ENCODE measurements at regions of chr2 and their contacts with region 1.

Region 1: GRCh38 chr2:156435715-156436496 is at the start of gene GPD2:
- DNase-seq: peak; percentile 90 to 95 (median 93)
- H3K4me3 ChIP-seq: peak within 1 kb of the TSS; percentile 63 to 78 (median 69)
- H3K27ac ChIP-seq: peak within 1 kb of the TSS; percentile 56 to 99 (median 98)
- H3K4me1 ChIP-seq: peaks cover 5 to 28% of the 10 kb centered on the region in 2 donors
- H3K27me3 ChIP-seq: no peaks in the 10 kb centered on the region
- CTCF ChIP-seq: peak in 1 of 6 experiments; percentile 11
- POLR2A ChIP-seq: peak in 1 of 2 donors; percentile 68
- total RNA-seq, gene GPD2: 10.7 to 33.8 (median 17.5) TPM

Region 2: GRCh38 chr2:156341452-156342253 is 94.3 kb before region 1 on chr2:
- intact Hi-C with region 1: loop called in 1 of 2 experiments (anchors 10 kb)
- DNase-seq: peak; percentile 90 to 96 (median 94)
- H3K4me3 ChIP-seq: peak overlapping the region; percentile 92 to 100 (median 100)
- H3K27ac ChIP-seq: peak overlapping the region; percentile 100
- H3K4me1 ChIP-seq: peaks cover 0 to 34% of the 10 kb centered on the region in 2 donors
- H3K27me3 ChIP-seq: no peaks in the 10 kb centered on the region
- CTCF ChIP-seq: no peak
- POLR2A ChIP-seq: peak; percentile 79 to 90

Region 3: GRCh38 chr2:156589381-156590079 is 153.6 kb after region 1 on chr2:
- intact Hi-C with region 1: loop called in 1 of 2 experiments (anchors 10 kb)
- DNase-seq: peak in 4 of 7 donors; percentile 21 to 46 (median 28)
- H3K4me3 ChIP-seq: no peak overlapping the region
- H3K27ac ChIP-seq: no peak overlapping the region
- H3K4me1 ChIP-seq: no peaks in the 10 kb centered on the region
- H3K27me3 ChIP-seq: no peaks in the 10 kb centered on the region
- CTCF ChIP-seq: peak; percentile 22 to 57 (median 50)
- POLR2A ChIP-seq: no peak

Measured in adrenal gland (tissue), 19 donors.